Right lobe of liver (tissue), 6 donors: ENCODE measurements at regions of chr1 and their contacts with region 1.

Region 1: GRCh38 chr1:180252638-180253536 is 22.8 kb downstream of the LHX4 start:
- DNase-seq: peak; percentile 78 to 82 (median 81)
- ATAC-seq: peak; percentile 80 to 94 (median 90)
- H3K4me3 ChIP-seq: no peak overlapping the region
- H3K27ac ChIP-seq: no peak overlapping the region
- H3K4me1 ChIP-seq: no peaks in the 10 kb centered on the region
- H3K27me3 ChIP-seq: no peaks in the 10 kb centered on the region
- CTCF ChIP-seq: peak; percentile 84 to 85 (median 85)
- POLR2A ChIP-seq: no peak

Region 2: DNA sequence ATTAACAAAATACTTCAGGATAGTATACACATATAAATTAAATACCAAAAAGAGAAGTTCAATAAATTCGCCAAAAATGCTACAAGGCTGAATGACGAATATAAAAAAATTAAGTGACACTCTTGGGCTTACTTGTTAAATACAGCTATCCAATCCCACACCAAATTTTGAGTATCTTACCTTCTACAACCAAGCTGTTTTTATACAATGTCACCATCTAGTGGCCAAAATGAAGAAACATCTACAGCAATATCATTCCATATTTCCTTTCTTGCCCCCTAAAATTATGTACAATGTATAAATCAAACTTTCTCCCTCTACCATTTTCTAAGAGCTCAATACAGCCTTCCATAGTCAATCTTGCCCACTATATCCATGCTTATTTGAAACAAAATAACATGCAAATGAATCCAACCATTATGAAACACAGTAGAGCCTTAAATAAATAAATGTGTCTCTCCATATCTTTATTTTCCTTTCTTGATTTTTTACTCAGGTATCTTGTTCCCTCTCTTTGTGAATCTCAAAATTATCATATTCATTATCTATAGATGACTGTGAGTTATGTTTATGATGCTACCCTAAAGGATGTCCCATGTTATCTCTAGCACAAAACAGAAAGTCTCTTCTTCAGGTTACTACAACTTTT is 163.2 kb after region 1 on chr1:
- intact Hi-C with region 1: loop called (anchors 5 to 10 kb)
- DNase-seq: no peak
- ATAC-seq: peak; percentile 56 to 69 (median 64)
- H3K4me3 ChIP-seq: no peak overlapping the region
- H3K27ac ChIP-seq: no peak overlapping the region
- H3K4me1 ChIP-seq: no peaks in the 10 kb centered on the region
- H3K27me3 ChIP-seq: no peaks in the 10 kb centered on the region
- CTCF ChIP-seq: peak; percentile 67 to 73 (median 70)
- POLR2A ChIP-seq: no peak

Region 3: DNA sequence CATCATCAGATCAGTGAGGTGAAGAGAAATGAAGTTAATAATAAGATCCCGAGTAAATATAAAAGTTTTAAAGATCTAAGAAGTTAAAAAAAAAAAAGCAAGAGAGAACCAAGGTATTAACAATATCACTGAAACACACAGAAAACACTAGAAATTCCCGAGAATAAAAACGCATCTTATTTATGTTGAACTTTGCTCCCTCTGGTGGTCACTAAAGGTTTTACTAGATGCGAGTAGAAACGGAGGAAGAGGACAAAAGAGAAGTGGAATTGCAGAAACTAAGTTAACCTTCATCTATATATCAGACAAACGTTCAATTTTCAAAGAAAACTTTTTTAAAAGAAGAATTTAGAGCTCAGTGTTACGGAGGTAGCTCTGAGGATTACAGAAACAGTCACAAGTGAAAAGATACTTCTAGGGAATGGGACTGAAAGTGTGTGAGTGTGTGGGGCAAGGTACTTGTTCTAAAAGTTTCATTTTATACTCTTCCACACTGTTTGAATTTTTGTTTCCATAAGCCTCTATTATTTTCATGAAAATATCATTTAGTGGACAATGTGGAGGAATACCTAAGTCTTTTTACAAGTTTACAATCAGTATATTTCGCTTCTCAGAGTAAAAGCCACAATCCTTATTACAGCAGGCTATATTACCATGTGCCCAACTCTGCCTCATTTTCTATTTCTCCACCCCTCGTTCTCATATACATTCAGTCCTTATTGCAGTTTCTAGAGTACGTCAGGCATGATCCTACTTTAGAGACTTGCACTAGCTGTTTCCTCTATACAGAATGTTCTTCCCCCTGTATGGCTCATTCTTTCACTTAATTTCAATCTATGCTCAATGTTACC is 229.8 kb after region 1 on chr1:
- intact Hi-C with region 1: loop called in 1 of 2 experiments (anchors 10 kb)
- DNase-seq: no peak
- ATAC-seq: peak; percentile 56 to 72 (median 70)
- H3K4me3 ChIP-seq: no peak overlapping the region
- H3K27ac ChIP-seq: no peak overlapping the region
- H3K4me1 ChIP-seq: no peaks in the 10 kb centered on the region
- H3K27me3 ChIP-seq: no peaks in the 10 kb centered on the region
- CTCF ChIP-seq: peak; percentile 48 to 71 (median 68)
- POLR2A ChIP-seq: no peak